ENCODE measurements at regions of chr2 and their contacts with region 1.

Region 1: DNA sequence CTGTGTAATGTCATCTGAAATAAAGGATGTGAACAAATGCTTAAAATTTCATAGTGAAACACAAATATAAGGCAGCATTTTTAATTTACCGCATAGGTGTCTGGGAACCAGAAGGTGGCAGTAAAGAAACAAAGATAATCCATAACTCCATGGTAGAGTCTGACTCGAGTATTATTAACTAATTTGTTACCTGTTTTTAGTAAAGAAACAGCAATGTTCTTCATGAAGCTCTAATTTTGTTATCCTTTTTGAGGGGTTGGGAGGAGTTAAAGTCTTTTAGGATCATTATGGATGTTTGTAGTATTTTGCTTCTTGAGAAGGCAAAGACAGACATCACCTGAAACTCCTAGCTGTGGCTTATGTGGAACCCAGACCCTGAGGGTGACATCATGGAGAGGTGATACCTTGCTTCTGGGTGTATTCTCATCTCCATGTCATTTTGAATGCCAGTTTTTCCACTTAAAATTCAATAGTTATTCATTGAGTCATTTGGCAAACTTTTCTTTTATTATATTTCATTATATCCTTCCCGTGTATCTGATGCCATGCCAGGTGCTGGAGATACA is 286.2 kb upstream of the EPAS1 start:
- DNase-seq: no peak
- H3K4me3 ChIP-seq: no peak overlapping the region
- H3K27ac ChIP-seq: no peak overlapping the region
- H3K4me1 ChIP-seq: peaks cover 0 to 13% (median 9%) of the 10 kb centered on the region in 4 donors
- H3K27me3 ChIP-seq: no peaks in the 10 kb centered on the region
- CTCF ChIP-seq: peak; percentile 58 to 69 (median 63)
- EP300 ChIP-seq: no peak
- POLR2A ChIP-seq: no peak

Region 2: DNA sequence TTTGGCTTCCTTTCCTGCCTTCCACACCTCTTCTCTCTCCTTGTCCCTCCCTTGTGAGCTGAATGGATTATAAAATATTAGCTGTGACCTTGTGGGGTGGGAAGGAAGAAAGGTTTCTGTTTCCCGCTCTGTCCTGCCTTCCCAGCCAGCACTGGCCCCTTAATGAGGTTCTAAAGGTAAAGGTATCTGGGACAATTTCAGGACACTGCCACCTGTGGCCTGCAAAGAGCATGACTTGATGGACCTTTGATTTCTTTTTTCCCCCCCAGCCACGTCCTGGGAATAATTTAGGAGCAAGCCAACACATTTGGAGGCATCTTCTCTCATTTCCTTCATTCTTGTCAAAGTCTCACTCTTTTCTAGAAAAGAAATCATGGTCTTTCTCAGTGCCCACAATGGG is 39.5 kb after region 1 on chr2:
- intact Hi-C with region 1: loop called (anchors 5 kb)
- DNase-seq: no peak
- H3K4me3 ChIP-seq: no peak overlapping the region
- H3K27ac ChIP-seq: no peak overlapping the region
- H3K4me1 ChIP-seq: no peaks in the 10 kb centered on the region
- H3K27me3 ChIP-seq: no peaks in the 10 kb centered on the region
- CTCF ChIP-seq: no peak
- EP300 ChIP-seq: no peak
- POLR2A ChIP-seq: no peak

Region 3: GRCh38 chr2:46555011-46555410 is 544.0 kb after region 1 on chr2:
- intact Hi-C with region 1: no loop called
- DNase-seq: peak; percentile 87
- H3K4me3 ChIP-seq: no peak overlapping the region
- H3K27ac ChIP-seq: peak overlapping the region; percentile 76 to 85 (median 80)
- H3K4me1 ChIP-seq: peaks cover 63 to 88% (median 77%) of the 10 kb centered on the region in 4 donors
- H3K27me3 ChIP-seq: no peaks in the 10 kb centered on the region
- CTCF ChIP-seq: peak in 1 of 3 experiments; percentile 26
- EP300 ChIP-seq: no peak
- POLR2A ChIP-seq: no peak